Naive thymus-derived CD4-positive, alpha-beta T cell (primary cell): ENCODE measurements at regions of chr12 and their contacts with region 1.

Region 1: GRCh38 chr12:110039085-110039807 is 9.1 kb downstream of the C12orf76 start:
- DNase-seq: peak in 7 of 9 donors; percentile 34 to 59 (median 56)
- ATAC-seq: peak; percentile 70
- H3K4me3 ChIP-seq: no peak overlapping the region
- H3K4me3 Mint-ChIP-seq: peak overlapping the region; percentile 26 to 68 (median 43)
- H3K27ac ChIP-seq: peak overlapping the region; percentile 60
- H3K27ac Mint-ChIP-seq: peak overlapping the region; percentile 82 to 97 (median 92)
- H3K4me1 ChIP-seq: peaks cover 8 to 24% of the 10 kb centered on the region in 2 donors
- H3K4me1 Mint-ChIP-seq: peaks cover 25 to 63% (median 33%) of the 10 kb centered on the region in 7 donors
- H3K27me3 ChIP-seq: no peaks in the 10 kb centered on the region
- H3K27me3 Mint-ChIP-seq: no peaks in the 10 kb centered on the region

Region 2: DNA sequence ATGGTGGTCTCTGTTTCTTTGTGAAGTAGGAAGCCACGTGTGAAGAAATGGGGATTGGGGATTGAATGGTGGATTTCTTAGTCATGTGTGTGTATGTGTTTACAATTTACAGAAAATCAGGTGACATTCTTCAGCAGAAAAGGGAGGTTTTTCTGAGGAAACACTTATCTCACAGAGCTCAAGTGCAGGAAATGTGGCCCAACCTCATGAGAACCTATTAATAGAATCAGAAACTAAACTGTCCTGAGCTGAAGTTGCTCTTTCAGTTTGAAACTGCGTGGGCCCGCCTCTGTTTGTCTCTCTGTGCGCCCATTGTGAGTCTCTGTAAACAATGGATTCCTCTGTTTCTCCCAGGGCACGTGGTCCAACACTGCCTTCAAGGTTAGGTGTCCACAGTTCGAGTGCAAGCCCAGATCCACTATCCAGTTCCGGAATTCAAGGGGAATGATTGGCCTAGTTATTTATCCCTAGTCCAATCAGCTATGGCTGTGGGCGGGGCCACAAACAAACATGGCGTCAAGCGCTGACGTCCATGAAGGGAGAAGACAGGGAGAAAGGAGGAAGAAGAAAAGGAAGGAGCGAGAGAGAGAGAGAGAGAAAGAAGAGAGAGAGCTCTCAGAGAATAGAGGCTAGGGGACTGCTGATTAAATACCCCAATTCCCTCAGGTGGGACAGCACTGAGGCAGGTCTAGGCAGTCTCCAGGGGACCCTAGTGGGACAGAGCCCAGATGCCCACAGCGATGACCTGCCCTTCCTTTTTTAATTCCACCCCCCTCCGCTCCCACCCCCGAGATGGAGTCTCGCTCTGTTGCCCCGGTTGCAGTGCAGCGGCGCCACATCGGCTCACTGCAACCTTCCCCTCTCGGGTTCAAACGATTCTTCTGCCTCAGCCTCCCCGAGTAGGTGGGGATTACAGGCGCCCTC is 40.5 kb after region 1 on chr12:
- CTCF ChIA-PET with region 1: interaction called, 6 read pairs
- POLR2A ChIA-PET with region 1: interaction called, 4 read pairs
- intact Hi-C with region 1: loop called (anchors 1 to 5 kb)
- DNase-seq: peak; percentile 44 to 83 (median 75)
- ATAC-seq: peak; percentile 96
- H3K4me3 ChIP-seq: peak overlapping the region; percentile 42
- H3K4me3 Mint-ChIP-seq: peak overlapping the region; percentile 76 to 94 (median 86)
- H3K27ac ChIP-seq: peak overlapping the region; percentile 71
- H3K27ac Mint-ChIP-seq: peak overlapping the region; percentile 92 to 99 (median 98)
- H3K4me1 ChIP-seq: peaks cover 9 to 21% of the 10 kb centered on the region in 2 donors
- H3K4me1 Mint-ChIP-seq: peaks cover 13 to 47% (median 26%) of the 10 kb centered on the region in 7 donors
- H3K27me3 ChIP-seq: no peaks in the 10 kb centered on the region
- H3K27me3 Mint-ChIP-seq: peaks cover 0 to 5% (median 0%) of the 10 kb centered on the region in 5 donors